Common myeloid progenitor, CD34-positive (primary cell): ENCODE measurements at regions of chr11 and their contacts with region 1.

Region 1: DNA sequence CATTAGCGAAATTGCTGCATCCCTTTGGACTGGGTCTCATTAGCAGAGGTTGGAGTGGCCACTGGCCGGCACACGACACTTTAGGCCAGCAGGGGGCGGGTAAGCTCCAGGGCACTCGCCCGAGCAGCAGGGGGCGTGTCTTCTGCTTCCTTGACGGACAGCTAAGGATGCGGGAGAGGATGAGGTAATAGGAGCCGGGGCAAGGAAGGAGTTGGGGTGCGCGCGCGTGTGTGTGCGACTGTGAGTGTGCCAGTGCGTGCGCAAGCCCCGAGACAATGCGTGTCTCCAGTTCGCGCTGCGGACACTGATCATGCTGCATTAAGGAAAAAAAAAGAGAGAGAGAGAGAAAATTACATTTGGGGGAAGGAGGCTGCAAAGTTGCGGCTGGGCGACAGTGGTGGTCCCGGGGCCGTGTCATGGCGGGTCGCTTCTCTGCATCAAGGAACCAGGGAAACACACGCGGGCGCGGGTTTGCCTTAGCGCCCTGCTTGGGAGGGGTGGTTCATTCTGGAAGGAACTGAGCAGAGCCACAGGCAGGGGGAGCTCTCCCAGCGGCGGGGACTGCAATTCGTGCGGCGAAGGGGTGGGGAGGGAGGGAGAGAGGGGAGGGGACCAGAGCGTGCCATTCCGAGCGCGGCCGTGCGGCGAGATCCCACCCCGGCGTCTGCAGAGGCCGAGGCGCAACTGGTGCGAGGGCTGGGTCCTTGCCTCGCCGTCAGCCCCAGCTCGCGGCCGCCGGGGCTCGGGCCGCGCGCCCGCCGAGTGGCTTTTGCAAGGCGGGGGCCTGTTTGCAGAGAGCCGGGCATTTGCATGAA is at the start of gene DTX4:
- DNase-seq: peak; percentile 91 to 95 (median 95)
- H3K4me3 ChIP-seq: peak within 1 kb of the TSS; percentile 61 to 82 (median 71)
- H3K27ac ChIP-seq: no peak within 1 kb of the TSS
- H3K4me1 ChIP-seq: peaks cover 0 to 21% (median 16%) of the 10 kb centered on the region in 4 experiments
- H3K27me3 ChIP-seq: peaks cover 0 to 34% (median 21%) of the 10 kb centered on the region in 5 experiments

Region 2: DNA sequence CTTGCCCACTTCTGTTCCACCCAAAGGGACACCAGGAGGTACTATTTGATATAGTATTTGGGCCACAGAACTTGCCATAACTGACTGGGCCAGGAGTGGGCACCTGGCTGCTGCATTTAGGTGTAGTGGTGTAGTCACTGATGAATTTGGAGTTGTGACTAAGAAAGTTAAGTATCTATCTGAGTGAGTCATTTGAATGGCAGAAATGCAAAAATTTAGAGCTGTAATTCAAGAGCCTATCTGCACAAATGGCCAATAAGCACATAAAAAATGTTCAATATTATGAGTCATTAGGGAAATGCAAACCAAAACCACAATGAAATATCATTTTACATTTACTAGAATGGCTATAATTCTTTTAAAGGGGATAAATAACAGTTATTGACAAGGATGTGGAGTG is 341.9 kb before region 1 on chr11:
- CTCF ChIA-PET with region 1: no interaction called
- POLR2A ChIA-PET with region 1: no interaction called
- DNase-seq: peak; percentile 43 to 90 (median 83)
- H3K4me3 ChIP-seq: no peak overlapping the region
- H3K27ac ChIP-seq: no peak overlapping the region
- H3K4me1 ChIP-seq: peaks cover 0 to 13% (median 0%) of the 10 kb centered on the region in 4 experiments
- H3K27me3 ChIP-seq: no peaks in the 10 kb centered on the region

Region 3: GRCh38 chr11:59012398-59013265 is 159.1 kb before region 1 on chr11:
- CTCF ChIA-PET with region 1: no interaction called
- POLR2A ChIA-PET with region 1: no interaction called
- DNase-seq: peak in 1 of 3 donors; percentile 15
- H3K4me3 ChIP-seq: no peak overlapping the region
- H3K27ac ChIP-seq: no peak overlapping the region
- H3K4me1 ChIP-seq: peaks cover 29 to 52% (median 40%) of the 10 kb centered on the region in 4 experiments
- H3K27me3 ChIP-seq: no peaks in the 10 kb centered on the region

Region 4: GRCh38 chr11:59186130-59186594 is 14.4 kb after region 1 on chr11:
- CTCF ChIA-PET with region 1: interaction called, 76 read pairs
- POLR2A ChIA-PET with region 1: no interaction called
- DNase-seq: peak; percentile 25 to 38 (median 33)
- H3K4me3 ChIP-seq: no peak overlapping the region
- H3K27ac ChIP-seq: no peak overlapping the region
- H3K4me1 ChIP-seq: peaks cover 0 to 5% (median 1%) of the 10 kb centered on the region in 4 experiments
- H3K27me3 ChIP-seq: no peaks in the 10 kb centered on the region

Region 5: GRCh38 chr11:59429924-59430516 is 258.3 kb after region 1 on chr11:
- CTCF ChIA-PET with region 1: interaction called, 53 read pairs
- POLR2A ChIA-PET with region 1: no interaction called
- DNase-seq: peak; percentile 72 to 85 (median 79)
- H3K4me3 ChIP-seq: no peak overlapping the region
- H3K27ac ChIP-seq: no peak overlapping the region
- H3K4me1 ChIP-seq: no peaks in the 10 kb centered on the region
- H3K27me3 ChIP-seq: no peaks in the 10 kb centered on the region

Region 6: DNA sequence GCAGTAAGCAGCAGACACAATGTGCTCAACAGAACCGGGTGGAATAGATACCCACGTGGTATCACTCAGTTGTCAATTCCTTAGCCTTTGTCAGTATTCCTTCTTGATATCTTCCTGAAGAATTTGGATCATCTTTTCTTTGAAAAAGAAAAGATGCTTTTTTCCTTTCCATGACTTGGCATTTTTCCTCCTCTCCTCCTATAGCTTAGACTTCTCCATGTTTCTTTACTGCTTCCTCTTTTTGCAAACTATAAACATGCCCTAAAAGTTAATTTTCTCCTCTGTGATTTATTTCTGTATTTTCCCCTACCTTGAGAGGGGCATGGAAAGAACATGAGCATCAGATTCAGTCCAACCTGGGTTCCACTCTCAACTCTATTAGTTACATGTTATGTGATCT is 661.9 kb after region 1 on chr11:
- CTCF ChIA-PET with region 1: no interaction called
- POLR2A ChIA-PET with region 1: no interaction called
- DNase-seq: peak in 2 of 3 donors; percentile 45
- H3K4me3 ChIP-seq: no peak overlapping the region
- H3K27ac ChIP-seq: no peak overlapping the region
- H3K4me1 ChIP-seq: peaks cover 0 to 6% (median 0%) of the 10 kb centered on the region in 4 experiments
- H3K27me3 ChIP-seq: no peaks in the 10 kb centered on the region